ENCODE measurements at regions of chr13 and their contacts with region 1.

Region 1: DNA sequence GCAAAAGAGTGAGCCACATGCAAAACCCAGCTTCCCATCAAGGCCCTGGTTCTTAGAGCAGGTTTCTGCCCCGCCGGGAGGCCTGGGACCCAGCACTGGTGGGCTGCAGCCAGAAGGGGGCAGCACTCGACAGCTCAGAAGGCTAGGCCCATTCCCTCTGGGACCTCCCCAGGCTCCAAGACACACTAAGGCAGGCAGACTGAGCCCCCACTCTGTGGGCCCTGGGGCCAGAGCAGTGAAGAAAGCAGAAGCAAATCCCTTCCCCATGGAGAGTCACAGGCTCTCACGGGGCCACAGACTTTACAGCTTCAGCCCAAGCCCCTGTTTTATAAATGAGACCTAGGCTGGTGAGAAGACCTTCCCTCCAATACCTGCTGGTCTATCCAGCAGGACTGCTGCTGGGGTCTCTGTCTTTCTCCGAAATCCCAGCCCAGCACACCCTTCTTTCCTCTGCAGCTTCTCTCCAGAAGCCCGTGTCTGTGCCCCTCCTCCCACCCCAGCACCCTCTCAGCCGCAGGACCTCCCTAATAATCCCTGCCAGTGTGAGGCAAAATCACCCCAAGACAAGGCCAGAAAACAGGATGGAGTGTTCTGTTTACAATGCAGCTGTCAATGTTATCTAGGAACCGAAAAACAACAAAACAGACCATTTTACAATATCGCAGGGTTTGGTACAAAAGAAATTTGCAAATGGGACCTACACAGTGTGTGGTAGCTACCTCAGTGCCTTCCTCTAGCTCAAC is 109.3 kb downstream of the ABCC4 start:
- DNase-seq: peak; percentile 81
- H3K4me3 ChIP-seq: no peak overlapping the region
- H3K27ac ChIP-seq: peak overlapping the region; percentile 37 to 62
- H3K4me1 ChIP-seq: peaks cover 3% of the 10 kb centered on the region
- H3K27me3 ChIP-seq: no peaks in the 10 kb centered on the region
- CTCF ChIP-seq: peak; percentile 74 to 93 (median 89)
- POLR2A ChIP-seq: no peak

Region 2: DNA sequence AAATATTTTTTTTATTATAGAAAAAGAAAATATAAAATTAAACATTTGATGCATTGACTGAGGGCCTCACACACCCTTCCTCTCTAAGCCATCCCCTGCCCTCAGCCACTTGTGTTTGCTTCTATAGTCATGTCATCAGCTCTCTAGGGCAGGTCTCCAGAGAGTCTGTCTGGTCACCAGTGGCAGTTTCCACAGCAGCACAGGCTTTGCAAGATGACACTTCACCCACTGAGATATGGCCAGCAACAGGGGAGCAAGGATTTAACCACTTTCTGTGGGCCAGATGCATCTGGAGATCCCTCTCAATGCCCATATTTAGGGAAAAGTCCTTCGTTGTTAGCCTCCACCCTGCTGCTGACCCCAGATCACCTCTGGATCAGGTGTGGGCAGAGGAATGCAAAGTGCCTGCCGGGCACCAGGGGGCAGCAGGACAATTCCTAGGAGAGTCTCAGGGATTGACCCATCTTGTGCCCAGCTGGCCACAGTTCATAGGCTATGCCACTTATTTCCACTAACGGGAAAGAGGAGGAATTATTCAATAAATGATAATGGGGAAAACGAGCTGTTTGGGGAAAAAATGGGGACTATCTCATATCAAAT is 104.4 kb after region 1 on chr13:
- intact Hi-C with region 1: loop called (anchors 5 kb)
- DNase-seq: no peak
- H3K4me3 ChIP-seq: no peak overlapping the region
- H3K27ac ChIP-seq: peak overlapping the region; percentile 81 to 89
- H3K4me1 ChIP-seq: no peaks in the 10 kb centered on the region
- H3K27me3 ChIP-seq: no peaks in the 10 kb centered on the region
- CTCF ChIP-seq: peak in 3 of 4 experiments; percentile 38 to 57 (median 57)
- POLR2A ChIP-seq: no peak

Region 3: GRCh38 chr13:95335667-95336066 is 143.7 kb after region 1 on chr13:
- intact Hi-C with region 1: no loop called
- DNase-seq: no peak
- H3K4me3 ChIP-seq: no peak overlapping the region
- H3K27ac ChIP-seq: no peak overlapping the region
- H3K4me1 ChIP-seq: no peaks in the 10 kb centered on the region
- H3K27me3 ChIP-seq: no peaks in the 10 kb centered on the region
- CTCF ChIP-seq: no peak
- POLR2A ChIP-seq: no peak

Region 4: GRCh38 chr13:95367309-95367843 is 175.4 kb after region 1 on chr13:
- intact Hi-C with region 1: no loop called
- DNase-seq: no peak
- H3K4me3 ChIP-seq: no peak overlapping the region
- H3K27ac ChIP-seq: no peak overlapping the region
- H3K4me1 ChIP-seq: no peaks in the 10 kb centered on the region
- H3K27me3 ChIP-seq: no peaks in the 10 kb centered on the region
- CTCF ChIP-seq: no peak
- POLR2A ChIP-seq: no peak

Region 5: GRCh38 chr13:95382411-95382810 is 190.4 kb after region 1 on chr13:
- intact Hi-C with region 1: loop called (anchors 5 kb)
- DNase-seq: no peak
- H3K4me3 ChIP-seq: no peak overlapping the region
- H3K27ac ChIP-seq: no peak overlapping the region
- H3K4me1 ChIP-seq: no peaks in the 10 kb centered on the region
- H3K27me3 ChIP-seq: no peaks in the 10 kb centered on the region
- CTCF ChIP-seq: no peak
- POLR2A ChIP-seq: no peak

Region 6: DNA sequence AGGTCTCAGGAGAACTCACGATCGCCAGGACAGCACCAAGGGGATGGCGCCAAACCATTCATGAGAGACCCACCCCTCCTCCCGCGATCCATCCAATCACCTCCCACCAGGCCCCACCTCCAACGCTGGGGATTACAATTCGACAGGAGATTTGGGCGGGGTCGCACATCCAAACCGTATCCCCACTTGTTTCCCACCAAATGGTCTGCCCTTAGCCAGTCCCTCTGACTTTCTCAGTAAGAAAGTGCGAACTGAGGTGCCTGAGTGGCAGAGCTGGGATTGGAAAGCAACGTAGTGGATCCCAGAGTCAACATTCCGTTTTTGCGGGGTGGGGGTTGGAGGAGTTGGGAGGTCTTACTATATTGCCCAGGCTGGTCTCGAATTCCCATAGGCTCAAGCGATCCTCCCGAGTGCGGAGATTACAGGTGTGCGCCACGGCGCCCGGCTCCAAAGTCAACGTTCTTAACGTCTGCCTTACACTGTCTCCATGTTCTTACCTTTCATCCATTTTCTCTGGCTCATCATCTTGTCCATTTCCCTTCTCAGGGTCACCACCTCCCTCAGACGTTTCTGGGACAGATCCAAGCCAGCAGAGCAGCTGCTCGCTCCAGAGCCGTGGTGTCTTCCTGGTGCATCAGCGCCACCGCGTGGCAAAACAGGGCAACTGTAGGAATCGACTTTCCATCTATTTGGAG is 212.0 kb after region 1 on chr13:
- intact Hi-C with region 1: loop called (anchors 2 kb)
- DNase-seq: peak; percentile 82
- H3K4me3 ChIP-seq: peak overlapping the region; percentile 1 to 13
- H3K27ac ChIP-seq: no peak overlapping the region
- H3K4me1 ChIP-seq: no peaks in the 10 kb centered on the region
- H3K27me3 ChIP-seq: no peaks in the 10 kb centered on the region
- CTCF ChIP-seq: peak; percentile 93 to 96 (median 94)
- POLR2A ChIP-seq: no peak

Measured in prostate gland (tissue), 2 donors.